Cardiac septum (tissue), 1 donor: ENCODE measurements at regions of chr20 and their contacts with region 1.

Region 1: DNA sequence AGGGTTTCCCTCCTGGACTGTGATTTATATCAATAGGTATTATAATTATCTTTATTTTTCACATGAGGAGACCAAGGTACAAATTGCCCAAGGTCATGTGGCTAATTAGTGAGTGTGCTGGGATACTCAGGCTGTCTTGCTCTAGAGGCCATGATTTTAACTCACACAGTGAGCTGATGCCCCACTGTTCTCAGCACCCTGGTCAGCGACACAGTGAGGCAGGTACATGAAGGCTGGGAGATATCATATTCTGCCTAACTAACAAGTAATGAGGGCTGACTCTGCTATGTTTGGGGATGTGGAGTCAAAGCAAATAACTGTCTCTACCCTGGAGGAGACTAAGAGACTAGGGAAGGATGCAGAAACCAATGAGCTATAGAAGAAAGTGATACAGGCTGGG is 501.1 kb downstream of the PTPRT start:
- DNase-seq: no peak

Region 2: GRCh38 chr20:42628683-42629082 is 59.9 kb before region 1 on chr20:
- intact Hi-C with region 1: loop called (anchors 10 kb)
- DNase-seq: no peak

Region 3: DNA sequence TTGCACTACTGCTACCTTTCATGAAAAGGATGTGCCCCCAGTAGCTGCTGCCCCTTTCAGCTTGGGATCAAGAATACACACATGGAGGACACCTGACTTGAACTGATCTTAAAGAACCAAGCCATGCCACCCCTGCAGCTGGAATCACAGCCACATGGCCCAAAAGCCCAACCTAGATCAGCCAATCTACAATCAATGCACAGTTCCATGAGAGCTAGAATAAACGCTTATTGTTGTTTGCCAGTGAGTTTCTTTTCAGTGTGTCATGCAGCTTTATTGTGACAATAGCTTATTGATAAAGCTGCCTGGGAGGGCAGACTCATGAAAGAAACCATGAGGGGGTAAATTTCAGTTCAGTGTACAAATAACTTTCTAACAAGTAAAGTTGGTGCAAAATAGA is 103.5 kb after region 1 on chr20:
- intact Hi-C with region 1: no loop called
- DNase-seq: no peak

Region 4: GRCh38 chr20:42901689-42902440 is 213.3 kb after region 1 on chr20:
- intact Hi-C with region 1: no loop called
- DNase-seq: no peak